ENCODE measurements at regions of chr15 and their contacts with region 1.

Region 1: DNA sequence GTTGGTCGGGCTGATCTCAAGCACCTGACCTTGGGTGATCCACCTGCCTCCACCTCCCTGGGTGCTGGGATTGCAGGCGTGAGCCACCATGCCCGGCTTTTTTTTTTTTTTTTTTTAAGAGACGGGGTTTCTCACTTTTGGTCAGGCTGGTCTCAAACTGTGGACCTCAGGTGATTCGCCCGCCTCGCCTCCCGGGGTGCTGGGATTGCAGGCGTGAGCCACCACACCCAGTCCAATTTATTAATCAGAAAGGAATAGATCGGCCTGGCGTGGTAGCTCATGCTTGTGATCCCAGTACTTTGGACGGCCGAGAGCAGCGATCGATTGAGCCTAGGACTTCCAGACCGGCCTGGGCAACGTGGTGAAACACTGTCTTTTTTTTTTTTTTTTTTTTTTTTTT is 13.9 kb upstream of the GOLGA8M start:
- DNase-seq: no peak
- H3K4me3 ChIP-seq: no peak overlapping the region
- H3K27ac ChIP-seq: no peak overlapping the region
- H3K4me1 ChIP-seq: no peaks in the 10 kb centered on the region
- H3K27me3 ChIP-seq: no peaks in the 10 kb centered on the region
- CTCF ChIP-seq: no peak

Region 2: DNA sequence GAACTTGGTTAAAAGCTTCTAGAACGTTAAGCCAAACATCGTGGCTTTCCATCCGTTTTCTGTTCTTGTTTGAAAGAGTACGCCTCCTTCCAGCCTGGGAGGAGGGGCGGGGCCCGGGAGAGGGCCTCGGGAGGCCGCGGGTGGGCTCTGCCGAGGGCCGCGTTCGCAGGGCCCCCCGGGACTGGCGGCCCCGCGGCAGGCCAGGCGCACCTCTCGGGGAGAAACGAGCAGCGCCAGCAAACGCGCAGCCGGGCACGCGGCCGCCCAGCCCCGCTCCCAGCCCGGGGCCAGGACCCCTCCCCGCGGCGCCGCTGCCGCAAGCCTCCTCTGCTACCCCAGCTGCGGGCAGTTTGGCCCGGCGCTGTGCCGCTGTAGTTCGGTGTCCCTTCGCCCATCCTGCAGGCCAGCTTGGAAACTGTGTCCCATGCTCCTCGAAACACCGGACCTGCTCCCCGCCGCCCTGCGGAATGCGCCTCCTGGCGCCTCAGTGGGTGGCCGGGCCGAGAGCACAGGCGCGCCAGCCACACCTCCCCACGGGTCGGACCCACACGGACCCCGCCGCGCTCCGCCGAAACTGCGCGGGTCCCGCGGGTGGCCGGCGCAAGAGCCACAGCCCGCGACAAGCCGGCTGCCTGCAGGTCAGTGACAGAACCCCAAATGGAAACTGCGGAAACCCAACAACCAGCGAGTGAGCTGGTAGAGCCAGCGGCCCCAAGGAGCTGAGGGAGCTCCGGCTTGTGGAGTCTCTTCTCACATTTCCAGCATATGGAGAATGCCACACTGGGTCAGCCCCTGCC is 629.2 kb before region 1 on chr15:
- CTCF ChIA-PET with region 1: no interaction called
- POLR2A ChIA-PET with region 1: interaction called, 18 read pairs
- intact Hi-C with region 1: no loop called
- DNase-seq: peak; percentile 54
- H3K4me3 ChIP-seq: peak overlapping the region; percentile 51
- H3K27ac ChIP-seq: no peak overlapping the region
- H3K4me1 ChIP-seq: peaks cover 9% of the 10 kb centered on the region
- H3K27me3 ChIP-seq: peaks cover 19% of the 10 kb centered on the region
- CTCF ChIP-seq: no peak

Region 3: DNA sequence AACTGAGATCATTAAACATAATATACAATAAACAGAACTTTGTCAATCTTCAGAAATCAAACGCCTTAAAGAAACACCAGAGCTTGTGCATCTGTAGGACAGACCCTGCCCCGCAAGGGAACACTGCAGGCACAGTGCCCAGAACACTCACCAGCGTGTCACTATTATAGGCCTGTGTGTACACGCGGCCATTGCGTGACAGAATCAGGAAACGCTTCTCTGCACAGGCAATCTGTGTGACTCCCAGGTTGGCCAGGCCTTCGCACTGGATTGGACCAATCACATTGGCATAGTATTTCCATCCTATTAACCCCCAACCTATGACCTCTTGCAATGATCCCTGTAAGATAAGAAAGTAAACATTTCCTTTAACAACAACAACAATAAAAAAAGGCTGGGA is 457.0 kb before region 1 on chr15:
- CTCF ChIA-PET with region 1: no interaction called
- POLR2A ChIA-PET with region 1: no interaction called
- intact Hi-C with region 1: no loop called
- DNase-seq: no peak
- H3K4me3 ChIP-seq: no peak overlapping the region
- H3K27ac ChIP-seq: no peak overlapping the region
- H3K4me1 ChIP-seq: no peaks in the 10 kb centered on the region
- H3K27me3 ChIP-seq: no peaks in the 10 kb centered on the region
- CTCF ChIP-seq: no peak

Region 4: DNA sequence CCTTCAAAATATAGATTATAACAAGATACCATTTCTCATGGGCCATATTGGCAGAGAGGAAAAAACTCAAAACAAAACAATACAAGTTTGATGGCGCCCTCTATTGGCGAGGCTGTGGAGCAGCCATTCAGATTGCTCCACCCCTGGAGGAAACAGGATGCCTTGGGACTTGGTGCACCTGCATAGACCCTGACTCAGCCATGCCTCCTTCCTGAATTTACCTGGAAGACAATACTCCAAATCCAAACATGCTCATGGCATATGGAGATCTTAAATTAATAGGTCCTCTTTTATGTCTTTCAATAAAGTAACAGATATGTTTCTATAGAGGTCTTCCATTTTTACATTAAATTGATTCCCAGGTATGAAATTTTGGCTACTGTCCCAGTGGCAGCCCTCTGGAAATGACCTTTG is 249.7 kb after region 1 on chr15:
- CTCF ChIA-PET with region 1: no interaction called
- POLR2A ChIA-PET with region 1: no interaction called
- intact Hi-C with region 1: no loop called
- DNase-seq: peak; percentile 55
- H3K4me3 ChIP-seq: no peak overlapping the region
- H3K27ac ChIP-seq: no peak overlapping the region
- H3K4me1 ChIP-seq: no peaks in the 10 kb centered on the region
- H3K27me3 ChIP-seq: no peaks in the 10 kb centered on the region
- CTCF ChIP-seq: peak; percentile 92

Region 5: DNA sequence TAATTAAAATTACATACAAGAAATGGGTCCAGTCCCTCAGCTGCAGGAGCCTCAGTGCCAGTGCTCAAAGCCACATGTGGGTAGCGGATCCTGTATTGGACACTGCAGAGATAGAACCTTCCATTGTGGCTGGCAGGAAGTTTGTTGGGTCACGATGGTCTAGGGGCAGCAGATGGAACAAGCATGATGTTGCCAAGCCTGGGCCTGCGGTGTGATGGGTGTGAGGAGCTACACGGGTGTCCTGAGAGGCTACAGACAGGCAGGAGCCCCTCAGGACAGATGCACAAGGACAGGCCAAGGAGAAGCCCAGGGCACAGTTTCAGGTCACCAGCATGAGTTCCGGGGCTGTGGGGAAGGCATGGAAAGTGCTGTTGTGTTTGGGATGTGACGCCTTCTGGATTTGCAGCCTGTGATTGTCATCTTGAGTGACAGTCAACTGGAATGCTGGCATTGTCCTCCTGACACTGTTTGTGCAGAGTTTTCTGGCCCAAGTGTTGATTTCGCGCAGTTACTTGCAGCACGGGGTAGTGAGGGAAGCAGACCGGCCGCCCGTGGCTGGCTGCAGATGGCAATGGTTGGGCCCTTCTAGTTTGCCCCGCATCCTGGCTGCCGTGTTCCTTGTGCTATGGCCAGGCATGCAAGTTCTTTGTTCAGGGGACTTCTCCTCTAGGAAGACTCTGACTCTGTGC is 366.4 kb after region 1 on chr15:
- CTCF ChIA-PET with region 1: no interaction called
- POLR2A ChIA-PET with region 1: no interaction called
- intact Hi-C with region 1: no loop called
- DNase-seq: no peak
- H3K4me3 ChIP-seq: no peak overlapping the region
- H3K27ac ChIP-seq: no peak overlapping the region
- H3K4me1 ChIP-seq: no peaks in the 10 kb centered on the region
- H3K27me3 ChIP-seq: no peaks in the 10 kb centered on the region
- CTCF ChIP-seq: no peak

Measured in A673 (cell line).